Activated naive CD4-positive, alpha-beta T cell treated with anti-CD3 and anti-CD28 coated beads for 36 hours (primary cell): ENCODE measurements at regions of chr10 and their contacts with region 1.

Region 1: GRCh38 chr10:105857268-105858264 is 1216.5 kb downstream of the SORCS3 start:
- DNase-seq: no peak
- H3K4me3 Mint-ChIP-seq: no peak overlapping the region
- H3K27ac Mint-ChIP-seq: no peak overlapping the region
- H3K4me1 Mint-ChIP-seq: peaks cover 25% of the 10 kb centered on the region
- H3K27me3 Mint-ChIP-seq: no peaks in the 10 kb centered on the region

Region 2: DNA sequence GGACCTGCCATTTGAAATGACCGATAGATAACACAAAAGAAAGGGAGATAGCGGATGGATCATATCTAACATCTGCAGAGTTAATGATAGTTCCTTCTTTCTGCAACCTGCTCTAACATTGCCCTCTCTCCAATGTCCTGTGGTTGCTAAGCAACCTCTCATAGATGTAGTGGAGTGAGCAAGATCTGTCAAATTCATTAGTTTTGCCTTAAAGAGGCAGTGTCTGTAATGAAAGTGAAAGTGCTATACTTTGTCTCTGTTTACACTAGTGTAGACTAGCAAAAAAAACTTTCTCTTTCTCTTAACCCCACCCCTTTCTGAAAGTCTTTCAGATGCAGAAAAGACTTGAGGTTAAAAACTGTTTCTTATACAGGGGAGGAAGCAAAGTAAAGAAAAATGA is 19.6 kb before region 1 on chr10:
- CTCF ChIA-PET with region 1: no interaction called
- intact Hi-C with region 1: loop called (anchors 2 kb)
- DNase-seq: no peak
- H3K4me3 Mint-ChIP-seq: peak overlapping the region; percentile 68
- H3K27ac Mint-ChIP-seq: no peak overlapping the region
- H3K4me1 Mint-ChIP-seq: peaks cover 25% of the 10 kb centered on the region
- H3K27me3 Mint-ChIP-seq: no peaks in the 10 kb centered on the region